ENCODE measurements at regions of chr20 and their contacts with region 1.

Region 1: DNA sequence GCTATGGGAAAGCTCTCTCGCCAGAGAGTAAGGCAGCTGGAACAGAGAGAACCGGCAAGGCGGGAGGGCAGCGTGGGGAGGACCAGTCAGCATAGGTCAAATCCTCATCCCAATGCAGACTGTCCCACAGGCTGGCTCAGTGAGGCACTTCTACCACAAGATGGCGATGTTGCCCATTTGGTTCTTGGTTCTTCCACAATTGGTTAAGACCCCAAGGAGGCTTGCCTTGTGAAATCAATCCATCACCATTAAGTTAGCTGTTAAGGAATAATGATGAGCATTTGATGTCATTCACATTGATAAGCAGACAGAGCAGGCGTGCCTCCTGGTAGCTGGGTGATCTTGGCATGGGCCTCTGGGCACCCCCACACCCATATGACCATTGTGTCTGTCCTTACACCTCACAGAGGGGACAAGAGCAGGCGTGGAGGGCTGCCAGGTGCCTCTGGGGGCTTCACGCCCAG is 2.4 kb downstream of the CSTL1 start:
- DNase-seq: peak; percentile 81 to 92
- ATAC-seq: peak; percentile 79 to 93
- H3K4me3 ChIP-seq: no peak overlapping the region
- H3K27ac ChIP-seq: no peak overlapping the region
- H3K4me1 ChIP-seq: peaks cover 6% of the 10 kb centered on the region; the same call in 2 of the 3 replicates
- CTCF ChIP-seq: peak; percentile 89
- EP300 ChIP-seq: no peak
- POLR2A ChIP-seq: no peak
- RAD21 ChIP-seq: peak; percentile 83 to 86

Region 2: GRCh38 chr20:23420943-23421931 is 20.6 kb before region 1 on chr20 and contains the start of gene NAPB:
- CTCF ChIA-PET with region 1: interaction called, 21 read pairs
- POLR2A ChIA-PET with region 1: interaction called, 3 read pairs
- DNase-seq: peak; percentile 91 to 94
- ATAC-seq: peak; percentile 98 to 100
- H3K4me3 ChIP-seq: peak within 1 kb of the TSS; percentile 84
- H3K27ac ChIP-seq: peak within 1 kb of the TSS; percentile 84 to 93
- H3K4me1 ChIP-seq: peaks cover 10% of the 10 kb centered on the region; the same call in 2 of the 3 replicates
- CTCF ChIP-seq: peak; percentile 9; the same call in 2 of the 3 replicates
- EP300 ChIP-seq: no peak
- POLR2A ChIP-seq: peak; percentile 89
- RAD21 ChIP-seq: no peak
- polyA plus RNA-seq, gene NAPB: 8.2 and 12.7 TPM in 2 replicates

Region 3: DNA sequence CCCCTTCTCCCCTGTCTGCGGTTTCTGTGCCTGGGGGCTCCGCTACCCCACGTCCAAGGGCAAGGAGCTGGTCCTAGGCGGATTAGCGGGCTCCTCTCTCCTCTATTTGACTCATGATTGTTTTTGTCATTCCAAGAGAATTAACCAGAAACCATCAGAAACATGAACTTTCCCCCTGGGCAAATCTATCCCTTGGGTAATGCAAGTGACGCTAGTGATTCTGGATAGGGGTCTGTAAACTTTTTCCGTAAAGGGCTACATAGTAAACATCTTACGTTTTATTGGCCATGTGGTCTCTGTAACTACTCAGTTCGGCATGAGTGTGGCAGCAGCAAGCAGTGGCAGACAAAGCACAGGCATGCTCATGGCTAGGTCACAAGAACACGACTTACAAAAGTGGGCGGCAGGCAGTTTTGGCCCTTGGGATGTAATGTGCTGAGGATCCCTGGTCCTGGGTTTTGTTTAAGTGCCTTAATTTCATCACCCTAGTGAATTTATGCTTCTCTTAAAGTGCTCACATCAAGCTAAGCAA is 10.1 kb after region 1 on chr20:
- CTCF ChIA-PET with region 1: interaction called, 18 read pairs
- POLR2A ChIA-PET with region 1: no interaction called
- DNase-seq: no peak
- ATAC-seq: no peak
- H3K4me3 ChIP-seq: no peak overlapping the region
- H3K27ac ChIP-seq: no peak overlapping the region
- H3K4me1 ChIP-seq: no peaks in the 10 kb centered on the region
- CTCF ChIP-seq: no peak
- EP300 ChIP-seq: no peak
- POLR2A ChIP-seq: no peak
- RAD21 ChIP-seq: no peak

Region 4: DNA sequence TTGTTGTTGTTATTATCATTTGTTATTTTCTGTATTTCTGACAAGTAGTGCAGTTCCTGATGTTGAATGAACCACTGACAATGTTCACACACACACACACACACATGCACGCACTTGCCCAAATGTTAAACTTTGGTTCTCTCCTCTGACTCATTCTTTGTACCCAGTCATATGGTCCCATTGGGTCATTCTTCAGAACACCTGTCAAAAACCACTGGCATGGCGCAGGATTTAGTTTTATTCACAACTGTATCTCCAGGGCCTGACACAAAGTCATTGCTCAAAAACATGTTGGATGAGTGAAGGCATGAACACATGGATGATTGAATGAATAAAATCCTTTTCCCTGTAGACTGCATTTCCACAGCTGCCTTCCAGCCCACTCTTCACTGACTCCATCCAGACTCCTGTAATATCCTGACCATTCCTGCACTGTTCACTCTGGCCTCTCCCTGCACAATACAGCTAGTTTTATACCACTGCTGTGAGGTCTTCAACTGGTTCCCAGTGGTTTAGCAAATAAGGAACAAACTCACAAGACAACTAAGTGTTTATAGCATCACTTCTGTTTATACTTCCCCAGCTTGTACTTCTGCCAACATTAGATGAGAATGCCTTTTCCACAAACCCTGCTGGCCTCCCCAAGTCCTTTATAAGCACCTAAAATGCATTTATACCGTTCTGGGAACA is 17.7 kb after region 1 on chr20:
- CTCF ChIA-PET with region 1: interaction called, 22 read pairs
- POLR2A ChIA-PET with region 1: interaction called, 6 read pairs
- DNase-seq: no peak
- ATAC-seq: no peak
- H3K4me3 ChIP-seq: no peak overlapping the region
- H3K27ac ChIP-seq: no peak overlapping the region
- H3K4me1 ChIP-seq: no peaks in the 10 kb centered on the region
- CTCF ChIP-seq: no peak
- EP300 ChIP-seq: no peak
- POLR2A ChIP-seq: no peak
- RAD21 ChIP-seq: no peak

Region 5: GRCh38 chr20:23540624-23541023 is 98.7 kb after region 1 on chr20:
- CTCF ChIA-PET with region 1: no interaction called
- POLR2A ChIA-PET with region 1: no interaction called
- DNase-seq: no peak
- ATAC-seq: no peak
- H3K4me3 ChIP-seq: no peak overlapping the region
- H3K27ac ChIP-seq: no peak overlapping the region
- H3K4me1 ChIP-seq: no peaks in the 10 kb centered on the region
- CTCF ChIP-seq: no peak
- EP300 ChIP-seq: no peak
- POLR2A ChIP-seq: no peak
- RAD21 ChIP-seq: no peak

Region 6: DNA sequence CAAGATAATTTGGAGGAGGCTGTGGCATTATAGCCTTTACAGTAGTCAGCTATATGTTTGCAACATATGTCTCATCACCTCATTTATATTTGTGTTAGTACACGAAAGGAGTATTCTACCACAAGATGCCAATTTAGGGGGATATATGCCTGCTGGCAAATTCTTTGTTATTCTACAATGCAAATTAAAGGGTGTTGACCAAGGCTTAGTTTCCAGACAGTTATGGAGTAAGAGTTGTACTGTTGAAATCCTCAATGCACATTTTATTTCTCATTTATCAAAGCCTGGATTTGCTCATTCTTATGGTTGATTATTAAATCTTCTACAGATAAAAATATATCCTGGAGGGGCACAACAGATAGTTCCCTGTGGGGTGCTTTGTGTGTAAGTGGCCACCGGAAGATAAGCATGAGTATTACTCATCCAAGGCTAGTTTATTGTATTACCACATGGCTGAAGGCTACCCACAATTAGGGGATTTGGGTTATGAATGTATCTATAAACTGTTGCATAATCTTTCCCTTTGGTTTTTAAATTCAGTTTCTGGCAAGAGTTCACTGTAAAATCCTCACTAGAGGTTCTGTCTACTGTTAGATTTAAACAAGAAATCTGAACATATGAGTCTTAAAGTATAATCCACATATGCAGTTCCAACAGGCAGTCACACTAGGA is 154.8 kb after region 1 on chr20:
- CTCF ChIA-PET with region 1: interaction called, 70 read pairs
- POLR2A ChIA-PET with region 1: no interaction called
- DNase-seq: no peak
- ATAC-seq: no peak; a peak in 1 of 6 replicates
- H3K4me3 ChIP-seq: no peak overlapping the region
- H3K27ac ChIP-seq: no peak overlapping the region
- H3K4me1 ChIP-seq: no peaks in the 10 kb centered on the region
- CTCF ChIP-seq: no peak
- EP300 ChIP-seq: no peak
- POLR2A ChIP-seq: no peak
- RAD21 ChIP-seq: no peak

Region 7: GRCh38 chr20:23606652-23607049 is 164.8 kb after region 1 on chr20:
- CTCF ChIA-PET with region 1: interaction called, 176 read pairs
- POLR2A ChIA-PET with region 1: no interaction called
- DNase-seq: peak; percentile 74 to 91
- ATAC-seq: peak; percentile 86 to 97
- H3K4me3 ChIP-seq: no peak overlapping the region
- H3K27ac ChIP-seq: no peak overlapping the region
- H3K4me1 ChIP-seq: no peaks in the 10 kb centered on the region; the same call in 2 of the 3 replicates
- CTCF ChIP-seq: peak; percentile 84
- EP300 ChIP-seq: no peak
- POLR2A ChIP-seq: no peak
- RAD21 ChIP-seq: peak; percentile 87 to 92

Region 8: DNA sequence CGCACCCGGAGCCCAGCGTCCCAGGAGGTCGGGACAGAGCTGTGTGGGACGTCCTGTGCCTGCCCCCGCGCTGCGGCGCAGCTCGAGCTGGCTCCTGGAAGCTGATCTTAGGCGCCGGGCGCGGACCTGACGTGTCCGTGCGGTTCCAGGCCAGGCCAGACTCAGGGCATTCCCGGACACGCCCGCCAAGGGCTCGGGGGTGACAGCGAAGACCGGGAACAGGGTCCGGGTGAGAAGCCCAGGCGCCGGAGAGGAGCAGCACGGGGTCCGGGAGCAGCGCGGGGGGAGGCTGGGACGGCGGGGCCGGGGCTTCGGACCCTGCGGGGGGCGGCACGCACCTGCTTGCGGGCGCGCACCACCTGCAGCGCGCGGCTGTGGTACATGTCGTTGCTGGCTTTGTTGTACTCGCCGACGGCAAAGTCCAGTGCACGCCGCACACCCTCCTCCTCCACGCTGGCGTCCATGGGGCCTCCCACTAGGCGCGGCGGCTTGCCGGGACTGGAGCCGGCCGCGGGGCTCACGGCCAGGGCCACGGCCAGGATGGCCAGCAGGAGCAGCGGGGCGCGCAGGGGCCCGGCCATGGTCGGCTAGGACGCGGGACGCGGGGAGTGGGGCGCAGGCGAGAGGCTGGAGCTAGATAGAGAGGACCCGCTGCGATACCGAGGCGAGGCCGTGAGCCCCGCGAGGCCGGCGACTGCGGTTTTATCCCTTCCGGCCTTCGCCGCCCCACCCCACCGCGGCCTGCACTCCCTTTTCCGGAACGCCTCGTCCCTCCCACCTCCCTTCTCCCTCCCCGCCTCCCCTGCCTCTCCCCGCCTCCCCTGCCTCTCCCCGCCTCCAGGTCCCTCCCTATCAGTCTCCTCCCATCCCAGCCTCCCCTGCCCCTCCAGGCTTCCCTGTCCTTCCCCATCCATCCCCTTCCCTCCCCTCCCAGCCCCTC is 195.7 kb after region 1 on chr20 and contains the start of gene CST3:
- CTCF ChIA-PET with region 1: interaction called, 10 read pairs
- POLR2A ChIA-PET with region 1: no interaction called
- DNase-seq: peak; percentile 91 to 97
- ATAC-seq: peak; percentile 85 to 93
- H3K4me3 ChIP-seq: peak within 1 kb of the TSS; percentile 95
- H3K27ac ChIP-seq: peak within 1 kb of the TSS; percentile 94 to 99
- H3K4me1 ChIP-seq: peaks cover 15% of the 10 kb centered on the region
- CTCF ChIP-seq: no peak
- EP300 ChIP-seq: no peak
- POLR2A ChIP-seq: peak; percentile 99
- RAD21 ChIP-seq: no peak
- polyA plus RNA-seq, gene CST3: 136 and 179 TPM in 2 replicates